IMR-90 (cell line): ENCODE measurements at regions of chr7 and their contacts with region 1.

Region 1: DNA sequence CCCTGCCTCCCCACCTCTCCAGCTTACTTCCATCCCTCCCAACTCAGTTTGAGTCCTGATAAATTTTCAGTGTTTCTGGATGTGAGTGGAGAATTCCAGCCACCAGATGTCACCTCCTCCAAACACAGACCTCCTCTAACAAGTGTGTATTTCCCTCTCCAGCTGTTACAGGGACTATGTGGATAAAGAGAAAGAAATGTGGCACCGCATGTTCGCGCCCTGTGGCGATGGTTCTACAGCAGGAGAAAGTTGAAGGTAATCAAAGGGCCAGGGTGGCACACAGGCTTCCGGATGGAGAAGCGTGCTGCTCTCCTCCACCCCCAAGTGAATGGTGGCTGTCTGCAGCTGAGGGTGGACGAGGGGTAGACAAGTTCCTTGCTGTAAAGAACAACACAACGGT is 14.7 kb downstream of the FKBP6 start:
- DNase-seq: peak; percentile 69
- ATAC-seq: peak; percentile 86
- H3K4me3 ChIP-seq: no peak overlapping the region
- H3K27ac ChIP-seq: no peak overlapping the region
- H3K4me1 ChIP-seq: peaks cover 6% of the 10 kb centered on the region
- H3K27me3 ChIP-seq: peaks cover 9% of the 10 kb centered on the region; the same call in 1 of the 2 replicates
- CTCF ChIP-seq: peak; percentile 72
- POLR2A ChIP-seq: no peak
- RAD21 ChIP-seq: peak; percentile 62

Region 2: GRCh38 chr7:73328696-73329095 is 13.9 kb before region 1 on chr7:
- CTCF ChIA-PET with region 1: interaction called, 11 read pairs
- POLR2A ChIA-PET with region 1: no interaction called
- dilution Hi-C with region 1: no loop called
- in situ Hi-C with region 1: no loop called
- intact Hi-C with region 1: no loop called
- DNase-seq: no peak
- ATAC-seq: no peak
- H3K4me3 ChIP-seq: no peak overlapping the region
- H3K27ac ChIP-seq: no peak overlapping the region
- H3K4me1 ChIP-seq: no peaks in the 10 kb centered on the region
- H3K27me3 ChIP-seq: peaks cover 10% of the 10 kb centered on the region
- CTCF ChIP-seq: no peak
- POLR2A ChIP-seq: no peak
- RAD21 ChIP-seq: no peak

Region 3: GRCh38 chr7:73436031-73436828 is 93.6 kb after region 1 on chr7:
- CTCF ChIA-PET with region 1: no interaction called
- POLR2A ChIA-PET with region 1: no interaction called
- dilution Hi-C with region 1: no loop called
- in situ Hi-C with region 1: loop called (anchors 5 kb)
- intact Hi-C with region 1: no loop called
- DNase-seq: no peak
- ATAC-seq: no peak
- H3K4me3 ChIP-seq: no peak overlapping the region
- H3K27ac ChIP-seq: no peak overlapping the region
- H3K4me1 ChIP-seq: peaks cover 3% of the 10 kb centered on the region; the same call in 1 of the 2 replicates
- H3K27me3 ChIP-seq: no peaks in the 10 kb centered on the region
- CTCF ChIP-seq: no peak
- POLR2A ChIP-seq: no peak
- RAD21 ChIP-seq: peak; percentile 26; the same call in 1 of the 2 replicates

Region 4: GRCh38 chr7:73451780-73452398 is 109.2 kb after region 1 on chr7:
- CTCF ChIA-PET with region 1: no interaction called
- POLR2A ChIA-PET with region 1: no interaction called
- dilution Hi-C with region 1: no loop called
- in situ Hi-C with region 1: no loop called
- intact Hi-C with region 1: loop called (anchors 1 kb)
- DNase-seq: peak; percentile 74
- ATAC-seq: peak; percentile 79
- H3K4me3 ChIP-seq: no peak overlapping the region
- H3K27ac ChIP-seq: no peak overlapping the region
- H3K4me1 ChIP-seq: peaks cover 17% of the 10 kb centered on the region
- H3K27me3 ChIP-seq: no peaks in the 10 kb centered on the region
- CTCF ChIP-seq: peak; percentile 98
- POLR2A ChIP-seq: peak; percentile 44; the same call in 1 of the 2 replicates
- RAD21 ChIP-seq: peak; percentile 98

Region 5: DNA sequence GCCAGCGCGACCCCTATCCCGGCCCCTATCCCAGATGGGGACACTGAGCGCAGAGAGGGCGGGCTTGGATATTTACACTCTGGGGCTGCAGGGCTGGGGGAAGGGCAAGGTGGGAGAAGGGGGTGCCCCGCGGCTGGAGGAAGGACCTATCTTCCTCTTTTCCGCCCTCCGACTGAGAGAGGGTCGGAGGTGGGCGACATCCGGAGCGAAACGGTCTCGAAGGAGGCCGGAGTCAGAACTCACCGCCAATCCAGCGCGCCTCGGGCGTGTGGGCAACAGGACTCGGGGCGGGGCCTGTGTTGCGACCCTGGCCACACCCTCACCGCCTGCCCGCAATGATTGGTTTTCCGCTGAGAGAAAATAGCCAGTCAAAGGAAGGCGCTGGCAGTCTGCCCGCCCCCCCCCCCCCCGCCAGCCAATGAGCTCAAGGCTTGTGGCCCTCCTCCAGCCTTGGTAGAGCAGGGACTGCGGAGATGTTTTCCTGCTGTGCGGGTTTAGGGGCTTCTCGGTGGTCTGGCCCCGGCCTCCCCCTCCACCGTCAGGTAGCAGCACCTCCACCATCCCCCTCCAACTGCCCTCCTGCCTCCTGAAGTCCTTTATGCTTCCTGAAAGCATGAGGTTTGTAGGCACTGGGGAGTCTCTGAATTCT is 499.7 kb after region 1 on chr7 and contains the start of gene METTL27:
- CTCF ChIA-PET with region 1: no interaction called
- POLR2A ChIA-PET with region 1: no interaction called
- dilution Hi-C with region 1: no loop called
- in situ Hi-C with region 1: no loop called
- intact Hi-C with region 1: no loop called
- DNase-seq: peak; percentile 91
- ATAC-seq: peak; percentile 99
- H3K4me3 ChIP-seq: peak within 1 kb of the TSS; percentile 92
- H3K27ac ChIP-seq: peak within 1 kb of the TSS; percentile 93
- H3K4me1 ChIP-seq: no peaks in the 10 kb centered on the region; the same call in 1 of the 2 replicates
- H3K27me3 ChIP-seq: no peaks in the 10 kb centered on the region
- CTCF ChIP-seq: no peak
- POLR2A ChIP-seq: peak; percentile 85
- RAD21 ChIP-seq: no peak
- total RNA-seq, gene METTL27: 1.7 and 2.3 TPM in 2 replicates